Activated CD4-positive, alpha-beta T cell treated with anti-CD3 and anti-CD28 coated beads for 36 hours (primary cell): ENCODE measurements at regions of chr11 and their contacts with region 1.

Region 1: GRCh38 chr11:121464352-121464946 is 11.7 kb upstream of the SORL1-AS1 start:
- DNase-seq: peak; percentile 94
- ATAC-seq: peak; percentile 82
- H3K4me3 Mint-ChIP-seq: peak overlapping the region; percentile 61
- H3K27ac Mint-ChIP-seq: peak overlapping the region; percentile 96
- H3K4me1 Mint-ChIP-seq: peaks cover 98% of the 10 kb centered on the region
- H3K27me3 Mint-ChIP-seq: no peaks in the 10 kb centered on the region

Region 2: DNA sequence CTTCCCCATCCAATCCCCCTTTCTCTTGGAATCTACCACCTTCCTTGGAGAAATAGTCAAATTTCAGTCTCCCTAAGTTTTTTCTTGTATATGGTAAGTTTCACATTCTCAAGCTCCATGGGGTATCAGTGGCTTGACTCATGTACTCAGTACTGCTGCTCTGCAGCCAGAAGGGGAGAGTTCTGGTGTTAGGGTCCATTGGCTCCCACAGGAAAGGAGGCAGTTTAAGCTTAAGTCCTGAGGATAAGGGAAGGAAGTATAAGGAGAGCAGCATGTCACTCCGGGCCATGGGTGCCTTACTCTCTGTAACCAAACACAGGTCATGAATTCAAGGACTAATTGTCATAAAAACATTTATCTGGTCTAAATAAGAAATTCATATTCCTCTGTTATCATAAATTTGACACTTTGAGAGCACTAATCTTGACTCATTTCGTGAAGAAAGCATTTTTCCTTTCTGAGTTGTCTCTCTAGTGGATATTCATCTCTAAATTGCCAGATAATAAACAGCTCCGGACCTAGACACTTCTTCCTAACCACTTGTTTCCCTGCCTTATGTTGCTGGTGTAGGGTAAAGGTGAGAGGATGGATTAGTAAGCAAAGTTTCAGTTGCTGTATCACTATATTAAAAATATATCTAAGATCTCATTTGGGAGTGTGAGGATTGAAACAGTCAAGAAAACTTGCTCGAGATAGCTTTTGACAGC is 32.5 kb before region 1 on chr11:
- CTCF ChIA-PET with region 1: interaction called, 5 read pairs
- POLR2A ChIA-PET with region 1: interaction called, 12 read pairs
- intact Hi-C with region 1: loop called (anchors 1 kb)
- DNase-seq: no peak
- ATAC-seq: peak; percentile 94
- H3K4me3 Mint-ChIP-seq: no peak overlapping the region
- H3K27ac Mint-ChIP-seq: peak overlapping the region; percentile 76
- H3K4me1 Mint-ChIP-seq: peaks cover 41% of the 10 kb centered on the region
- H3K27me3 Mint-ChIP-seq: no peaks in the 10 kb centered on the region

Region 3: GRCh38 chr11:121451986-121452608 is 12.4 kb before region 1 on chr11 and contains the start of gene SORL1:
- CTCF ChIA-PET with region 1: interaction called, 15 read pairs
- POLR2A ChIA-PET with region 1: interaction called, 51 read pairs
- intact Hi-C with region 1: loop called (anchors 1 kb)
- DNase-seq: peak; percentile 89
- ATAC-seq: peak; percentile 59
- H3K4me3 Mint-ChIP-seq: peak within 1 kb of the TSS; percentile 89
- H3K27ac Mint-ChIP-seq: peak within 1 kb of the TSS; percentile 94
- H3K4me1 Mint-ChIP-seq: peaks cover 84% of the 10 kb centered on the region
- H3K27me3 Mint-ChIP-seq: no peaks in the 10 kb centered on the region
- total RNA-seq, gene SORL1: 53.5 to 68.0 TPM

Region 4: DNA sequence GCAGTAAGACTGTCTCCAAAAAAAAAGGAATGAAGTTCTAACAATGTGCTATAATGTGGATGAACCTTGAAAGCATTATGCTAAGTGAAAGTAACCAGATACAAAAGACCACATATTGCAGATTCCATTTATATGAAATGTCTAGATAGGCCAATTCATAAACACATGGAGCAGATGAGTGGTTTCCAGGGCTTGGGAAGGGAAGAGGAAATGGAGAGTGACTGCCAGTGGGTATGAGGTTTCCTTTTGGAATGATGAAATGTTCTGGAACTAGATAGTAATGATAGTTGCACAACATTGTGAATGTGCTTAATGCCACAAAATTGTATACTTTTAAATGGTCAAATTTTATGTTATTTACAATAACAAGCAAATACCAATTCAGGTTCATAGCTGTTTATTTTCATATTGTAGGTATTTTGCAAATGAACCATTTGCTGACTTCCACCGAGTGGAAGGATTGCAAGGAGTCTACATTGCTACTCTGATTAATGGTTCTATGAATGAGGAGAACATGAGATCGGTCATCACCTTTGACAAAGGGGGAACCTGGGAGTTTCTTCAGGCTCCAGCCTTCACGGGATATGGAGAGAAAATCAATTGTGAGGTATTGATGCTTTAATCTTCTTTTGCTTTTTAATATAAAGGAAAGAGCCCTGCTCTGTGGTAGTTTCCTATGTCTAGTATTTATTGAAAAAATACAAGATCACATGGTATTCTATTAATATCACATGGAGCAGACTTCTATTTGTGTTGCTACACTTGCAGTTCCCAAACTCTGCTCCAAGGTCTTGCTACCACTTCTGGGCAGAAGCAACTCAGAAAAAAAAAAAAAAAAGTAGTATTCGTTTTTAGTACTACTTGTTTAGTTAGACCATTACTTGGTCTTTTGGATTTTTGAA is 56.0 kb after region 1 on chr11:
- CTCF ChIA-PET with region 1: no interaction called
- POLR2A ChIA-PET with region 1: no interaction called
- intact Hi-C with region 1: loop called in 1 of 2 experiments (anchors 5 kb)
- DNase-seq: no peak
- ATAC-seq: no peak
- H3K4me3 Mint-ChIP-seq: no peak overlapping the region
- H3K27ac Mint-ChIP-seq: peak overlapping the region; percentile 77
- H3K4me1 Mint-ChIP-seq: peaks cover 43% of the 10 kb centered on the region
- H3K27me3 Mint-ChIP-seq: no peaks in the 10 kb centered on the region

Region 5: GRCh38 chr11:121591405-121592033 is 127.1 kb after region 1 on chr11:
- CTCF ChIA-PET with region 1: interaction called, 6 read pairs
- POLR2A ChIA-PET with region 1: no interaction called
- intact Hi-C with region 1: loop called in 1 of 2 experiments (anchors 2 kb)
- DNase-seq: peak; percentile 82
- ATAC-seq: peak; percentile 73
- H3K4me3 Mint-ChIP-seq: no peak overlapping the region
- H3K27ac Mint-ChIP-seq: peak overlapping the region; percentile 66
- H3K4me1 Mint-ChIP-seq: peaks cover 22% of the 10 kb centered on the region
- H3K27me3 Mint-ChIP-seq: no peaks in the 10 kb centered on the region

Region 6: DNA sequence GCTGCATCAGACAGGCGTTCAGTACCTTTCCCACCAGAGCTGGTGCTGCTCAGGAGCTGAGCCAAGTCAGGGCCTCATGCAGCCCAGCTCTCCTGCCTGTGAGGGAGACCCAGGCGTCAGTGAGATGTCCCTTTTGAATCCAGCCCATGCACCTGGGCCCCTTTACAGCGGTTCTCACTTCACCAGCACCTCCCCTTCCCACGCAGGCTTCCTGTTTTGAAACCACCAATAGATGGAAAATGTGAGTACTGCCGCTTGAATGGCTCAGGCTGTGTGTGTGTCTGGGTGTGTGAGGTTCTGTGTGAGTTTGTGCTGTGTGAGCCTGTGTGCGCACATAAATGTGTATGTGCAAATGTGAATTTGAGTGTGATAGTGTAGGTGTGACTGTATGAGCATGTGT is 1279.5 kb after region 1 on chr11:
- CTCF ChIA-PET with region 1: no interaction called
- POLR2A ChIA-PET with region 1: no interaction called
- intact Hi-C with region 1: loop called in 1 of 2 experiments (anchors 2 kb)
- DNase-seq: peak; percentile 90
- ATAC-seq: peak; percentile 66
- H3K4me3 Mint-ChIP-seq: no peak overlapping the region
- H3K27ac Mint-ChIP-seq: no peak overlapping the region
- H3K4me1 Mint-ChIP-seq: peaks cover 14% of the 10 kb centered on the region
- H3K27me3 Mint-ChIP-seq: peaks cover 6% of the 10 kb centered on the region

Region 7: DNA sequence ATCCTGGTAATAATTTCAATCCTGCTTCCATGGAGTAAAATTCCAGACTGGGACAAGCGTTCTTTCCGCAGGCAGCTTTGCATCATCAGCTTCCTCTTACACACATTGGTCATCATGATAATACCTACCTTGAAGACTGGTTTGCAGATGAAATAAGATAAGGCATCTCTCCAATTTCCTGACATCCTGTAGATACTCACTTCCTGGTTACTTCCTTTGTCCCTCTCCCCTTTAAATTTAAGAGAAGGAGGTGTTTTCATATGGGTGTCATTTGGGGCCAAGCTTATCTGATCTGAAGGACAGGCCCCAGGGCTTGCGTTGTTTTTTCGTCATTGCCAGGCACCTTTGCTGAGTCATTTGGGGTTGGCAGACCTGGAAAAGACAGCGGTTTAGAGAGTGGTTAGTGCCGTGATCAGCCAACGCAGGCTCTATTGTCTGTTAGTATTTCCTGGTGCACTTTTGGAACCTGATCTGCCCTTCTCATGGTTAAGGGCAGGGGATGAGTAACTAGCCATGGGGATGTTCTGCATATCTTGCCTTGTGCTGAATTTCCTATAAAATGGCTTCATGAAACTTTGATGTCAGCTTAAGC is 1989.7 kb after region 1 on chr11:
- CTCF ChIA-PET with region 1: no interaction called
- POLR2A ChIA-PET with region 1: no interaction called
- intact Hi-C with region 1: loop called in 1 of 2 experiments (anchors 10 kb)
- DNase-seq: peak; percentile 88
- ATAC-seq: peak; percentile 87
- H3K4me3 Mint-ChIP-seq: peak overlapping the region; percentile 69
- H3K27ac Mint-ChIP-seq: peak overlapping the region; percentile 94
- H3K4me1 Mint-ChIP-seq: peaks cover 78% of the 10 kb centered on the region
- H3K27me3 Mint-ChIP-seq: no peaks in the 10 kb centered on the region